ENCODE measurements at regions of chr6 and their contacts with region 1.

Region 1: DNA sequence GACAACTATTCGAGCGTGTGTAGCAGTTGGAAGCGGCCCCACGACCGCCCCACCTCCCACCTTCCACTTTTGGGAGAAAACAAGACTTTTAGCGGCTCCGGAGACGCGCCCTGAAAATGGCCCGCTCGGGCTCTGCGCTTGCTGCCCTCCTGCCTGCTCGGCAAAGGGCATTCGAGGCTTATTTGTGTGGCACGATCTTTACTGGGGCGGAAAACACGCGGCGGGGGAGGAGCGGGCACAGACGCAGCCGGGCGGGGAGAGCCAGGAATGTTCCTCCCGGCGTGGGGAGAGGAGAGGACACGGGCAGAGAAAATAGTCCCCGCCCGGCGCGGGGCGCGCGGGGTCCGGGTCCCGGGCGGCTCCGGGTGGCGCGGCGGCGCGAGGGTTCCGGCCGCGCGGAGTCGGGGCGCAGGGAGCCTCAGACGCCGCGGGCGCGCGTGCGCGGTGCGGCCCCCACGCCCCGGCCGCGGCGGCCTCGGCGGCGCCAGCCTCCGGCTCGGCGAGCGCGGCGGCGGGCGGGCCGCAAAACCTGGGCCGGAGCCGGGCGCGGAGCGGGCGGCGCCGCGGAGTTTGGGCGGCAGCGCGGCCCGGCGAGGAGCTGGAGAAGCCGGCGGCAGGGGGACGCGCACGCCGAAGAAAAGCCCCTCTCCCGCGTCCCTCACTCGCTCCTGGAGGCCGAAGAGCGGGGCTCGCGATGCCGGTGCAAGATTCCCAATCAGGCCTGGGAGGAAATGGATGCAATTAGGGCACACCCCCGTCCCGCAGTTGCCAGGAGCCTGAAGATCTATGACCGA is 90.0 kb upstream of the ARID1B start:
- DNase-seq: peak; percentile 96

Region 2: GRCh38 chr6:156599978-156600590 is 87.1 kb before region 1 on chr6:
- intact Hi-C with region 1: no loop called
- DNase-seq: no peak

Region 3: GRCh38 chr6:156662025-156662445 is 25.2 kb before region 1 on chr6:
- intact Hi-C with region 1: no loop called
- DNase-seq: no peak

Region 4: DNA sequence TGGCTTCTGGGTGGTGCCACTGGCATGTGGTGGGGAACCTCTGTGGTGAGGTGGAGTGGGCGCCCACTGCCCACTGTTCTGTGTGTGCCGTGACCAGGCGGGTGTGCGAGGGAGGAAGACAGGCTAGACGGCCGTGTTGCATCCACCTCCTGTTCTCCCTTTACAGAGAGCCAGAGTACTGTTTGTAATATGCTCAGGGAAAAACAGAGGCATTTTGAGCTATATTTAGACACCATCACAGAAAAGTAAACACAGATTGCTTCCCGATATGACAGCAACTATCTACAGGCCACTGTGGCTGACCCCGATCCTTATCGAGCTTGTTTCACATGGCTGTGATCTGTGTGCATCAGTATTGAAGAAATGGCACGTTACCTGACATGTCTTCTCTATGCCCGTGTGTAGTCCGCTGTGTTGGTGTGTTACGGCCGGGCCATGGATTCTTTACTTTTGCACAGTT is 135.6 kb after region 1 on chr6:
- intact Hi-C with region 1: loop called in 1 of 2 experiments (anchors 5 kb)
- DNase-seq: no peak

Region 5: DNA sequence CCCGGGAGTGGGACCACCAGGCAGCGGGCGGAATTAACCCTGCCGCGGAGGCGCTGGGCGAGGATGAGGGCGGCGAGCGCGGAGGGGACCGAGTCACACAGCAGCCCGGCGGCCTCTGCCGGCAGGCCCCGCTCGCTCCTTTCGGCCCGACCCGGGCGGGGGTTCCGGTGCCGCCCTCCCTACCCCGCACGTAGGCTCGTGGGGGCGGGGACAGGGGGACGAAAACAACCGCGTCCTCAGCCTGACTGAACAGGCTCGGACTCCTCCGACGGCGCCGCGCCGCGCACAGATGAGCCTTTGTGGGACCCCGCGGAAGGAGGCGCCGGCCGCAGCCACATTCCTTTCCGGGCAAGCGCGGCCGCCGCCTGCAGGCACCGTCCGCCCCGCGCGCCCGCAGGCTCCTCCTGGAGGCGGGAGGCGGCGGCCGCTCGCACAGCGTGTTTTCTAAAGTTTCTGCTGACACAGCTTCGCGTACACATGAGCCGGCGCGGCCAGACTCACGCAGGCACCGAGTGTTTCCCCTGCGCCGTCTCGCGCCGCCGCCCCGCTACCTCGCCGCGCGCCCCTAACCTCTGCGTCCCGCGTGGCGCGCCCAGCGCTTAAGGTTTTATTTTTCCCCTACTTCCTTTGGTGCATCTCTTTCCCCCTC is 334.3 kb after region 1 on chr6:
- intact Hi-C with region 1: loop called (anchors 5 to 10 kb)
- DNase-seq: peak; percentile 97